ENCODE measurements at regions of chr11 and their contacts with region 1.

Region 1: GRCh38 chr11:44538375-44539054 is 26.9 kb upstream of the CD82 start:
- DNase-seq: peak; percentile 60
- H3K4me3 ChIP-seq: no peak overlapping the region
- H3K27ac ChIP-seq: no peak overlapping the region
- H3K4me1 ChIP-seq: no peaks in the 10 kb centered on the region
- H3K27me3 ChIP-seq: no peaks in the 10 kb centered on the region
- CTCF ChIP-seq: peak; percentile 85 to 96 (median 90)
- POLR2A ChIP-seq: no peak

Region 2: GRCh38 chr11:44095506-44096394 is 442.8 kb before region 1 on chr11 and contains the start of gene EXT2:
- intact Hi-C with region 1: loop called (anchors 5 kb)
- DNase-seq: peak; percentile 85
- H3K4me3 ChIP-seq: peak within 1 kb of the TSS; percentile 69 to 88
- H3K27ac ChIP-seq: peak within 1 kb of the TSS; percentile 67 to 76
- H3K4me1 ChIP-seq: peaks cover 9% of the 10 kb centered on the region
- H3K27me3 ChIP-seq: no peaks in the 10 kb centered on the region
- CTCF ChIP-seq: peak; percentile 59 to 95 (median 92)
- POLR2A ChIP-seq: peak; percentile 67
- total RNA-seq, gene EXT2: 76.5 to 96.7 TPM

Region 3: GRCh38 chr11:44110231-44110679 is 428.3 kb before region 1 on chr11:
- intact Hi-C with region 1: loop called (anchors 5 kb)
- DNase-seq: peak; percentile 30
- H3K4me3 ChIP-seq: no peak overlapping the region
- H3K27ac ChIP-seq: no peak overlapping the region
- H3K4me1 ChIP-seq: no peaks in the 10 kb centered on the region
- H3K27me3 ChIP-seq: no peaks in the 10 kb centered on the region
- CTCF ChIP-seq: peak in 3 of 4 experiments; percentile 38 to 54 (median 49)
- POLR2A ChIP-seq: no peak

Region 4: GRCh38 chr11:44133335-44133946 is 405.1 kb before region 1 on chr11:
- intact Hi-C with region 1: loop called (anchors 5 kb)
- DNase-seq: no peak
- H3K4me3 ChIP-seq: no peak overlapping the region
- H3K27ac ChIP-seq: no peak overlapping the region
- H3K4me1 ChIP-seq: no peaks in the 10 kb centered on the region
- H3K27me3 ChIP-seq: no peaks in the 10 kb centered on the region
- CTCF ChIP-seq: peak in 3 of 4 experiments; percentile 45 to 63 (median 57)
- POLR2A ChIP-seq: no peak

Region 5: DNA sequence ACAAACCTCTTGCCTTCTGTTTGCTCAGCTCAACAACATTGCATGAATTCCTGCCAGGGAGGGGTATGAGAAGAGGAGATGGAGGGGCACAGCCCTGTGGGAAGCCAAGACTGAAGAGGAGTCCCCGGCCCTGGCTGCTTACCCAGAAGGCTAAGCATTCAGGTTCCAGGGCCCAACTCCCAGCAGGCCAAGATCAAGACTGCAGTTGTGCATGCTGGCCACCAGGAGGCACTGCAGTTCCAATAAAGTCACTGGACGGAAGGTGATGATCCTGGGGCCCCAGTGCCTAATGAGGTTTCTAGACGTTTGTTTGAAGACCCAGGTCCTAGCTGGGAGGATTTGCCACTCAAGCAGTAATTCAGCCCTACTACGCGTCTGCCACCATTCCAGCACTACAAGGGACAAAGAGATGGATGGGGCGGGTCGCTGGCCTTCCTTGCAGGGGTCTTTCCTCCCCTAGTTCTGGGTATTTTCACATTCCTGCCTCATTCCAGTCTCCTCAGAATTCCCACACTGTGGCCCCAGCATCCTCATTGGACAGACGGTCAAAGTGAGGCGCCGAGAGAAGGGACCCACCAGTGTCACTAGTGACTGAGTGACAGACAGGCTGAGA is 252.1 kb before region 1 on chr11:
- intact Hi-C with region 1: loop called (anchors 1 kb)
- DNase-seq: no peak
- H3K4me3 ChIP-seq: no peak overlapping the region
- H3K27ac ChIP-seq: no peak overlapping the region
- H3K4me1 ChIP-seq: no peaks in the 10 kb centered on the region
- H3K27me3 ChIP-seq: no peaks in the 10 kb centered on the region
- CTCF ChIP-seq: peak; percentile 86 to 93 (median 88)
- POLR2A ChIP-seq: no peak

Region 6: DNA sequence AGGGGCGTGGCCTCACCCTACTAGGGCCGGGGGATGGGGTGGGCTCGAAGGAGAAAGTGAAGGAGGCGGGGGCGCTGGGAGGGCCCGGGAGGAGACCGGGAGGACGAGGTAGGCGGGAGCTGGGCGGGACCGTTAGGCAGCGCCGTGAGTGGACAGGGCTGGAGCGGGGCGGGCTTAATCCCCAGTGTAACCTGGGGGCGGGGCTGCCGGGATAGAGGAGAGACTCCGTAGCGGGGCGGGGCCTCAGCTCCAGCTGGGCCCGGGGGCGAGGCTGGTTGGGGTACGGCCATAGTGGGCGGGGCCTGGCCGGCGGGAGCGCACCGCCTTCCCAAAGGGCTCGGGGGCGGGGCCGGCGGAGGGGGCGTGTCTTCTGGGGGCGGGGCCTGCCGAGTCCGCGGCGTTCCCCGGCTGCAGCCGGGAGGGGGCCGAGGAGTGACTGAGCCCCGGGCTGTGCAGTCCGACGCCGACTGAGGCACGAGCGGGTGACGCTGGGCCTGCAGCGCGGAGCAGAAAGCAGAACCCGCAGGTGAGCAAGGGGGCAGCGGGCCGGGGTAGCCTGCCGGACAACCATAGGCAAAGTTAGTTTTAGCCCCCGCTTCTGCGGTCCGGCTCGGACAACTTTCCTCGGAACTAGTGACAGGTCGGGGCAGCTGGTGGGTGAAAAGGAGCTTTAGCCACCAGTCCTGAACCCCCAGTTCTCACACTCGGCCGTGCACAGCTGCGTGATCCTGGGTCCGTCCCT is 26.9 kb after region 1 on chr11 and contains the start of gene CD82:
- intact Hi-C with region 1: no loop called
- DNase-seq: peak; percentile 100
- H3K4me3 ChIP-seq: peak within 1 kb of the TSS; percentile 51 to 56
- H3K27ac ChIP-seq: peak within 1 kb of the TSS; percentile 96 to 99
- H3K4me1 ChIP-seq: peaks cover 8% of the 10 kb centered on the region
- H3K27me3 ChIP-seq: no peaks in the 10 kb centered on the region
- CTCF ChIP-seq: peak in 3 of 4 experiments; percentile 17 to 52 (median 45)
- POLR2A ChIP-seq: peak; percentile 97
- total RNA-seq, gene CD82: 35.1 to 54.6 TPM

Region 7: GRCh38 chr11:44651535-44652155 is 113.1 kb after region 1 on chr11:
- intact Hi-C with region 1: no loop called
- DNase-seq: no peak
- H3K4me3 ChIP-seq: no peak overlapping the region
- H3K27ac ChIP-seq: no peak overlapping the region
- H3K4me1 ChIP-seq: no peaks in the 10 kb centered on the region
- H3K27me3 ChIP-seq: no peaks in the 10 kb centered on the region
- CTCF ChIP-seq: no peak
- POLR2A ChIP-seq: no peak

Measured in prostate gland (tissue), 2 donors.